CD4-positive, alpha-beta T cell (primary cell): ENCODE measurements at regions of chr19 and their contacts with region 1.

Region 1: GRCh38 chr19:39125554-39126311 is at the start of gene PAK4:
- DNase-seq: peak; percentile 89 to 98 (median 95)
- ATAC-seq: peak; percentile 91
- H3K4me3 ChIP-seq: peak within 1 kb of the TSS; percentile 58
- H3K4me3 Mint-ChIP-seq: peak within 1 kb of the TSS; percentile 93
- H3K27ac ChIP-seq: peak within 1 kb of the TSS; percentile 69 to 88
- H3K27ac Mint-ChIP-seq: peak within 1 kb of the TSS; percentile 92
- H3K4me1 ChIP-seq: peaks cover 30% of the 10 kb centered on the region
- H3K4me1 Mint-ChIP-seq: peaks cover 55% of the 10 kb centered on the region
- H3K27me3 ChIP-seq: no peaks in the 10 kb centered on the region
- H3K27me3 Mint-ChIP-seq: peaks cover 5% of the 10 kb centered on the region
- CTCF ChIP-seq: no peak
- total RNA-seq, gene PAK4: 2.7 to 6.3 TPM

Region 2: GRCh38 chr19:39187559-39187957 is 61.8 kb after region 1 on chr19:
- CTCF ChIA-PET with region 1: interaction called, 4 read pairs
- POLR2A ChIA-PET with region 1: no interaction called
- intact Hi-C with region 1: loop called (anchors 1 to 5 kb)
- DNase-seq: no peak
- ATAC-seq: no peak
- H3K4me3 ChIP-seq: no peak overlapping the region
- H3K4me3 Mint-ChIP-seq: no peak overlapping the region
- H3K27ac ChIP-seq: no peak overlapping the region
- H3K27ac Mint-ChIP-seq: no peak overlapping the region
- H3K4me1 ChIP-seq: no peaks in the 10 kb centered on the region
- H3K4me1 Mint-ChIP-seq: no peaks in the 10 kb centered on the region
- H3K27me3 ChIP-seq: peaks cover 0 to 2% of the 10 kb centered on the region in 2 experiments
- H3K27me3 Mint-ChIP-seq: peaks cover 18% of the 10 kb centered on the region
- CTCF ChIP-seq: peak; percentile 28

Region 3: GRCh38 chr19:39328046-39328705 is 202.4 kb after region 1 on chr19:
- CTCF ChIA-PET with region 1: interaction called, 12 read pairs
- POLR2A ChIA-PET with region 1: interaction called, 5 read pairs
- intact Hi-C with region 1: loop called (anchors 1 kb)
- DNase-seq: peak; percentile 71 to 89 (median 80)
- ATAC-seq: peak; percentile 82
- H3K4me3 ChIP-seq: no peak overlapping the region
- H3K4me3 Mint-ChIP-seq: peak overlapping the region; percentile 68
- H3K27ac ChIP-seq: no peak overlapping the region
- H3K27ac Mint-ChIP-seq: peak overlapping the region; percentile 83
- H3K4me1 ChIP-seq: peaks cover 63% of the 10 kb centered on the region
- H3K4me1 Mint-ChIP-seq: peaks cover 33% of the 10 kb centered on the region
- H3K27me3 ChIP-seq: no peaks in the 10 kb centered on the region
- H3K27me3 Mint-ChIP-seq: no peaks in the 10 kb centered on the region
- CTCF ChIP-seq: peak; percentile 98

Region 4: DNA sequence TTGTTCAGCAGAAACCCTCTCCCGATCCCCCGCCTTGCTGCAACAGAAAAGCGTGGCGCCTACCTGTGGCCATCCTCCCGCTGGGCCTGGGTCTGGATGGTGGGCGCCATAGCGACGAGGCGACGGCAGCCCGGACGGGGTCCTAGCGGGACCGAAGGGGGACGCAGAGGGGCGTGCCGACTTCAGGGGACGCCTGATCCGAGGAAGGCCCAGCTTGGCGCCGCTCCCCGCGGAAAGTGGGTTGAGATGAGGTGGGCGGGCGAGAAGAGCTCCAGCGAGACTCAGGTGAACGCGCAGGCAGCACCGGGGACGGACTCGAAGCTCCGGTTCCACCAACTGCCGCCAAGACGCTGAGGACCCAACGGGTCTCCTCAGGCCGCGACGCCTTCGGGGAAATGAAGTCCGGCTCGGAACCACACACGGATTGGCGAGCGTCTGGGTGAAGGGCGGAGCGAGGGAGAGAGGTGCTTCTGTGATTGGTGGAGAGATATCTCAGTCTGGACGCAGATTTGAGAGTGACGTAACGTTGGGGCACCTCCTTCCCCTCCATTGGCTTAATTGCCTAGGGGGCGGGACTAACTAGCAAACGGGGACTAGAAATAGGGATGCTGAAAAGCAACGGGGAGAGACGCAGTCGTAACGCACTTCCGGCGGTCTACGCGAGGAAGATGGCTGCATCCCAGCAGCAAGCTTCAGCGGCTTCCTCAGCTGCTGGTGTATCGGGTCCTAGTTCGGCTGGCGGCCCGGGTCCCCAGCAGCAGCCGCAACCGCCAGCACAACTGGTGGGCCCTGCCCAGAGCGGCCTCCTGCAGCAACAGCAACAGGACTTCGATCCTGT is 265.2 kb after region 1 on chr19 and contains the starts of genes MED29 and PAF1:
- CTCF ChIA-PET with region 1: no interaction called
- POLR2A ChIA-PET with region 1: interaction called, 6 read pairs
- intact Hi-C with region 1: loop called in 1 of 2 experiments (anchors 5 kb)
- DNase-seq: peak; percentile 91 to 100 (median 94)
- ATAC-seq: peak; percentile 90
- H3K4me3 ChIP-seq: peak within 1 kb of the TSS; percentile 91
- H3K4me3 Mint-ChIP-seq: peak within 1 kb of the TSS; percentile 90
- H3K27ac ChIP-seq: peak within 1 kb of the TSS; percentile 98 to 100
- H3K27ac Mint-ChIP-seq: peak within 1 kb of the TSS; percentile 96
- H3K4me1 ChIP-seq: peaks cover 44% of the 10 kb centered on the region
- H3K4me1 Mint-ChIP-seq: peaks cover 33% of the 10 kb centered on the region
- H3K27me3 ChIP-seq: no peaks in the 10 kb centered on the region
- H3K27me3 Mint-ChIP-seq: no peaks in the 10 kb centered on the region
- CTCF ChIP-seq: no peak
- total RNA-seq, gene MED29: 45.0 to 46.1 TPM
- total RNA-seq, gene PAF1: 99.6 to 101 TPM

Region 5: GRCh38 chr19:39412100-39412866 is 286.6 kb after region 1 on chr19 and contains the start of gene PLEKHG2:
- CTCF ChIA-PET with region 1: no interaction called
- POLR2A ChIA-PET with region 1: interaction called, 6 read pairs
- intact Hi-C with region 1: loop called (anchors 5 to 10 kb)
- DNase-seq: peak; percentile 94 to 100 (median 97)
- ATAC-seq: peak; percentile 61
- H3K4me3 ChIP-seq: peak within 1 kb of the TSS; percentile 100
- H3K4me3 Mint-ChIP-seq: peak within 1 kb of the TSS; percentile 95
- H3K27ac ChIP-seq: peak within 1 kb of the TSS; percentile 100
- H3K27ac Mint-ChIP-seq: peak within 1 kb of the TSS; percentile 98
- H3K4me1 ChIP-seq: peaks cover 72% of the 10 kb centered on the region
- H3K4me1 Mint-ChIP-seq: peaks cover 41% of the 10 kb centered on the region
- H3K27me3 ChIP-seq: no peaks in the 10 kb centered on the region
- H3K27me3 Mint-ChIP-seq: peaks cover 12% of the 10 kb centered on the region
- CTCF ChIP-seq: peak; percentile 80
- total RNA-seq, gene PLEKHG2: 80.6 to 81.4 TPM

Region 6: DNA sequence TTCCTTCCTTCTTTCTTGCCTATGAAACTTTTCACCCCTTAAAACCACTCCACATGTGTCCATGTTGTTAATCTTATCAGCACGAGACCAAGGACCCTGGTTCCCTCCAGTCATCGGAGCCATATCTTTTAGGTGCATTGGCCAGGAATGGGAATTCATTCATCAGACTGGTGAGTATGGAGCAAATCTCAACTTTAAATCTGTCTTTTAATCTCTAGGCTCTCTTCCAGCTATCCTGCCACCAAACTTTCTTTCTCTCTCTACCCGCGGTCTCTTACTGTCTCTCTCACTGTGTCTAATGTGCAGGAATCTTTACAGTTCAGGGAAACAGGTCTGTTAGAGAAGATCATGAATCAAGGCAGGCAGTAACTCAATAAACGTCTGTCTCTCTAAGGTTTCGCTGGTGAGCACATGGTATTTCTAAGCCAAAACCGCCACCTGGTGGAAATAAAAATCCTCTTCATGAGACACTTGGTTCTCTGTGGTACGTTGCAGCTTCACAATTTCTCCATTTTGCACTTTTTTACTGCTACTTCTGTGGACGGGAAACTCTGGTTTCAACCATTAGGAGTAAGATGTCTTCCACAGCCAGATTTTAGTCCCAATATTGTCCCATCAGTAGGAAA is 546.1 kb after region 1 on chr19:
- CTCF ChIA-PET with region 1: no interaction called
- POLR2A ChIA-PET with region 1: no interaction called
- intact Hi-C with region 1: loop called (anchors 5 to 10 kb)
- DNase-seq: peak in 10 of 14 experiments; percentile 19 to 81 (median 45)
- ATAC-seq: peak; percentile 83
- H3K4me3 ChIP-seq: no peak overlapping the region
- H3K4me3 Mint-ChIP-seq: no peak overlapping the region
- H3K27ac ChIP-seq: no peak overlapping the region
- H3K27ac Mint-ChIP-seq: peak overlapping the region; percentile 2
- H3K4me1 ChIP-seq: peaks cover 20% of the 10 kb centered on the region
- H3K4me1 Mint-ChIP-seq: peaks cover 26% of the 10 kb centered on the region
- H3K27me3 ChIP-seq: no peaks in the 10 kb centered on the region
- H3K27me3 Mint-ChIP-seq: peaks cover 11% of the 10 kb centered on the region
- CTCF ChIP-seq: peak; percentile 69